ENCODE measurements at regions of chr19 and their contacts with region 1.

Region 1: DNA sequence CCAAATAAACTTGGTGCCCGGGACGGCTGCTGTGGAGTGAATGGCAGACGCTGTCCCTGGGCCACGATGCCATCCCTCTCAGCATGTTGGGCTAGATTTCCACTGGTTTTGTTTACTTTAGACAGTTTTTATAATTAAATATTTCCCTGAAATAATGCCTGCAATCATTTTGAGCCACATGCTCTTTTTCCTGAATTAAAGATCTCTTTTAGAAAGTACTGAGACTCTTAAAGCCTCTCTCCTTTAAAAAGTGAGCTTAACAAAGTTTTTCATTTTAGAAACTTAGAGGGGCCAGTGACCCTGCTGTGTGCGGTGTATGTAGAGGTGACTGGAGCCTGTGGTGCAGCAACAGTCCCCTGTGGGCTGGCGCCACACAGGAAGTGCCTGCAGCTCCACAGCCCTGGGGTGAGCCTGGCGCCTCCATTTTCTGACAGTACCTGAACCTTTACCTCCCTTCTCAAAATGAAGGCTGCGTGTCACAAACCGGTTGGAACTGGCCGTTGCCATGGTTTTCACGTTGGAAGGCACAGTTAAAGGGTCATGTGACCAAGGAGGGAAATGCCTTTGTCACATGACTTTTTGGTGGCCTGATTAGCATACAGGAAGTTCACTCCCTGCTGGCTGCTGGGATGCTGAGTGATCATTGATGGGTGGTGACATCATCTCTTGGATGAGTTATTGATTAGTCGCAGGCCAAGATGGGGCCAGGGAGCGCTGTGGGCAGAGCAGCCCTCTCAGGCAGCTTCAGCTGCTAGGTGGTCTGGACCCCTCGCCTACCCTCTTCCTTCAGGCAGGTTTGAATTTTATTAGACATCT is 26.3 kb downstream of the TSSK6 start:
- DNase-seq: peak; percentile 84 to 92 (median 88)
- ATAC-seq: peak; percentile 78
- H3K4me3 ChIP-seq: no peak overlapping the region
- H3K4me1 ChIP-seq: peaks cover 47% of the 10 kb centered on the region
- CTCF ChIP-seq: no peak

Region 2: GRCh38 chr19:19361075-19361594 is 127.9 kb before region 1 on chr19:
- intact Hi-C with region 1: loop called (anchors 5 to 10 kb)
- DNase-seq: peak in 2 of 3 donors; percentile 80 to 90
- ATAC-seq: peak; percentile 86
- H3K4me3 ChIP-seq: no peak overlapping the region
- H3K4me1 ChIP-seq: peaks cover 6% of the 10 kb centered on the region
- CTCF ChIP-seq: peak; percentile 85

Region 3: DNA sequence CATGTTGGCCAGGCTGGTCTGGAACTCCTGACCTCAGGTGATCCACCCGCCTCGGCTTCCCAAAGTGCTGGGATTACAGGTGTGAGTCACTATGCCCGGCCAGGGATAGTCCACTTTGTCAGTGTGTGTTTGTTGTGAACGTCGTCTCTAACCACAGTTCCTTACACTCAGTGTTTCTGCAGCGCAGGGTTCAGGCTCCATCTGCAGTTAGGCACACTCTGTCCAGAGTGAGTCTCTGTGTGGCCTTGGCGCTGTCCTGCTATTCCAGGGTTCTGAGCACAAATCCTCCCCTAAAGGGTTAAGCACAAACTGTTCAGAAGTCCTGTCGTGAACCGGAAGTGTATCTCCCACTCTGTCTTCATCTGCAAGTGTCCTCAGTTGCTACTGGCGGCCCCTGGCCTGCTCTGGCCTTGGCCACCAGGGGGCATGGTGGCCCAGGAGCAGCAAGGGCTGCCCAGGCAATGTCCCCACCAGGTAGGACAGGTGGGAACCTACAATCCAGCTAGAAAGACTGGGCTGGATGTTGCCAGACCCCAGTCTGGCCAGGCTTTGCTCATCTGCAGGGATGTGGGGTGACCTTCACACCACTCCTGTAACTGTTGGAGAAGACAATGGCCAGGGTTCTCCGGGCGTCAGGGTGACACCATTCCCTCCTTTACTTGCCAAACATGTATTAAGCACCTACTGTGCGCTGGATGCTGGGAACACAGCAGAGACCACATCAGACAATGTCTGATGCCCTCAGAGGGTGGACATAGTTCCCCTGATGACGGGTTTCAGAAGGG is 122.3 kb before region 1 on chr19:
- intact Hi-C with region 1: loop called (anchors 5 to 10 kb)
- DNase-seq: peak; percentile 83 to 88 (median 86)
- ATAC-seq: peak; percentile 92
- H3K4me3 ChIP-seq: no peak overlapping the region
- H3K4me1 ChIP-seq: peaks cover 9% of the 10 kb centered on the region
- CTCF ChIP-seq: peak; percentile 88

Region 4: GRCh38 chr19:19404879-19405860 is 83.9 kb before region 1 on chr19 and contains the start of gene GATAD2A:
- intact Hi-C with region 1: loop called in 1 of 2 experiments (anchors 10 kb)
- DNase-seq: peak; percentile 94 to 97 (median 97)
- ATAC-seq: peak; percentile 93
- H3K4me3 ChIP-seq: peak within 1 kb of the TSS; percentile 70
- H3K4me1 ChIP-seq: peaks cover 38% of the 10 kb centered on the region
- CTCF ChIP-seq: peak; percentile 37
- total RNA-seq, gene GATAD2A: 89.3 to 117 (median 107) TPM